ENCODE measurements at regions of chr2 and their contacts with region 1.

Region 1: DNA sequence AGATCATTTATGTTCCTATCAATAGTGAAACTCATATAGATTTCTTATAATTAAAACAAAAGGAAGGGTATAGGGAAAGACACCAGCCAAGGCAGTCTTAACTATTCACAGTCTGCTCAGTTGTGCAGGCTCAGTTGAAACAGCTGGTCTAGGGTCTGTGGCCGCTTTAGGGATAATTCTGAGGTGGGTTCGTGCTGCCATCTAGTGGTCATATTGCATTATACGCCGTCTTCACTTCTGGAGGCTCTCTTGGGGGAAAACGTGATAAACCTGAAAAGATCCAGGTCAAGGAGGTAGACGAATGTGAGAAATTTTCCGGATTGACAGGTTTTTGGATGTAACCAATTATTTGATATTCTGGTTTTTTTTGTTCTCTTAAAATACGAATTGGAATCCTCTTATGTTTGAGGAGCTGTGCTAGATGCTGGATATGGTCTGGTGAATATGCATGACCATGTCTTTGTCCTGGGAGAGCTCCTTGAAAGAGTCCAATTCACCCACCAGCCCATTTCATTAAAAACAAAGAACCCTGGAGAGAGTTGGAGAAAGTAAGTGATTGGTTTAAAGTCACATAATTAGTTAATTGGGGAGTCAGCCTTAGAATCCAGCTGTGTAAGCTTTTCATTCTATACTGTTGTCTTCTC is 492.4 kb downstream of the PLCL1 start:
- DNase-seq: peak; percentile 20 to 55 (median 25)
- H3K4me3 ChIP-seq: no peak overlapping the region
- H3K4me3 Mint-ChIP-seq: no peak overlapping the region
- H3K27ac ChIP-seq: no peak overlapping the region
- H3K27ac Mint-ChIP-seq: no peak overlapping the region
- H3K4me1 ChIP-seq: no peaks in the 10 kb centered on the region
- H3K4me1 Mint-ChIP-seq: peaks cover 0 to 6% (median 2%) of the 10 kb centered on the region in 3 donors
- H3K27me3 ChIP-seq: no peaks in the 10 kb centered on the region
- H3K27me3 Mint-ChIP-seq: peaks cover 12 to 35% of the 10 kb centered on the region in 2 donors

Region 2: GRCh38 chr2:197804049-197804757 is 492.6 kb before region 1 on chr2 and contains the start of gene PLCL1:
- CTCF ChIA-PET with region 1: interaction called, 15 read pairs
- POLR2A ChIA-PET with region 1: interaction called, 3 read pairs
- DNase-seq: peak; percentile 77 to 92 (median 84)
- H3K4me3 ChIP-seq: peak within 1 kb of the TSS; percentile 85
- H3K4me3 Mint-ChIP-seq: peak within 1 kb of the TSS; percentile 89 to 95 (median 91)
- H3K27ac ChIP-seq: peak within 1 kb of the TSS; percentile 17
- H3K27ac Mint-ChIP-seq: peak within 1 kb of the TSS; percentile 29 to 92 (median 82)
- H3K4me1 ChIP-seq: peaks cover 23% of the 10 kb centered on the region
- H3K4me1 Mint-ChIP-seq: peaks cover 32 to 54% (median 42%) of the 10 kb centered on the region in 3 donors
- H3K27me3 ChIP-seq: peaks cover 6% of the 10 kb centered on the region
- H3K27me3 Mint-ChIP-seq: peaks cover 19 to 41% of the 10 kb centered on the region in 2 donors
- total RNA-seq, gene PLCL1: 0.70 to 0.71 TPM

Region 3: DNA sequence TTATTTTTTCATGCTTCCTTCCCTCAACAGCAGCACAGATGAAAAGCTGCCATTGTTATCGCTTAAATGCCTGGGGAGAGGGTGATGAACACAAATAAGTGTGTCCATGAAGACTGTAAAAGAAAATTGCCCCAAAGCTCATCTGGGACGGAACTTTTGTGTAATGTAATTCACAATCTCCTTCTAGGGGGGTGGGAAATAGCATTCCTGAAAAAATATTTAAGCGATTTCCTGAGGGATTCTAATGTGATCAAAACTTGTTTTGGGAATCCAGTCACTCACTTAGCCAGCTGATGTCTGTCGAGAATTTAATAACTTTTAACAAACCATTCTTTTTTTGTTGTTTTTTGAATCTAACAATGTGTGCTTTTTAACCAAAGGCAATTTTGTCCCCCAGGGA is 64.5 kb before region 1 on chr2:
- CTCF ChIA-PET with region 1: no interaction called
- POLR2A ChIA-PET with region 1: no interaction called
- DNase-seq: no peak
- H3K4me3 ChIP-seq: no peak overlapping the region
- H3K4me3 Mint-ChIP-seq: no peak overlapping the region
- H3K27ac ChIP-seq: no peak overlapping the region
- H3K27ac Mint-ChIP-seq: no peak overlapping the region
- H3K4me1 ChIP-seq: no peaks in the 10 kb centered on the region
- H3K4me1 Mint-ChIP-seq: no peaks in the 10 kb centered on the region
- H3K27me3 ChIP-seq: no peaks in the 10 kb centered on the region
- H3K27me3 Mint-ChIP-seq: peaks cover 6 to 23% of the 10 kb centered on the region in 2 donors

Region 4: GRCh38 chr2:198314559-198315153 is 17.9 kb after region 1 on chr2:
- CTCF ChIA-PET with region 1: interaction called, 32 read pairs
- POLR2A ChIA-PET with region 1: no interaction called
- DNase-seq: peak in 2 of 5 donors; percentile 21 to 25
- H3K4me3 ChIP-seq: no peak overlapping the region
- H3K4me3 Mint-ChIP-seq: no peak overlapping the region
- H3K27ac ChIP-seq: no peak overlapping the region
- H3K27ac Mint-ChIP-seq: no peak overlapping the region
- H3K4me1 ChIP-seq: no peaks in the 10 kb centered on the region
- H3K4me1 Mint-ChIP-seq: peaks cover 0 to 3% (median 0%) of the 10 kb centered on the region in 3 donors
- H3K27me3 ChIP-seq: no peaks in the 10 kb centered on the region
- H3K27me3 Mint-ChIP-seq: peaks cover 20 to 70% of the 10 kb centered on the region in 2 donors

Measured in CD8-positive, alpha-beta memory T cell (primary cell).